IMR-90 (cell line): ENCODE measurements at regions of chr17 and their contacts with region 1.

Region 1: GRCh38 chr17:12256380-12256995 is 235.8 kb downstream of the MAP2K4 start:
- DNase-seq: peak; percentile 81
- ATAC-seq: peak; percentile 86
- H3K4me3 ChIP-seq: no peak overlapping the region
- H3K27ac ChIP-seq: no peak overlapping the region
- H3K4me1 ChIP-seq: peaks cover 7% of the 10 kb centered on the region
- H3K27me3 ChIP-seq: no peaks in the 10 kb centered on the region
- CTCF ChIP-seq: peak; percentile 93
- POLR2A ChIP-seq: peak; percentile 25; the same call in 1 of the 2 replicates
- RAD21 ChIP-seq: peak; percentile 93

Region 2: DNA sequence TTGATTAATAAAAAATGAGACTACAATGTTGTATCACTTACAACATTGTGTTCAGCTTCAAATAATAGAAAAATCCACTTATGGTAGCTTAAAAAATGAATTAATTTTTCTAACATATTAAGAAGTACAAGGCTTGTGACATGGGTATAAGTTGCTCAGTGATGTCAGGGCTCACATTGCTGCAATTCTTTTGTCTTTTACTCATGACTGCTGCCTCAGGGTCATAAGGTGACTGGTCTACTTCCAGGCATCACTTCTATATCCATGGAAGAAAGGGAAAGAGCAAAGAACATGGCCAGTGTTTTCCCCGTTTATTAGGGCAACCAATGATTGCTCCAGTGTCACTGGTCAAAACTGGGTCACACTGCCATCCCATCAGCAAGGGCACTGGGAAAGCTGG is 59.5 kb after region 1 on chr17:
- CTCF ChIA-PET with region 1: no interaction called
- POLR2A ChIA-PET with region 1: no interaction called
- dilution Hi-C with region 1: no loop called
- in situ Hi-C with region 1: no loop called
- intact Hi-C with region 1: no loop called
- DNase-seq: peak; percentile 64
- ATAC-seq: no peak
- H3K4me3 ChIP-seq: no peak overlapping the region
- H3K27ac ChIP-seq: no peak overlapping the region
- H3K4me1 ChIP-seq: peaks cover 14% of the 10 kb centered on the region
- H3K27me3 ChIP-seq: no peaks in the 10 kb centered on the region
- CTCF ChIP-seq: no peak
- POLR2A ChIP-seq: no peak
- RAD21 ChIP-seq: no peak

Region 3: DNA sequence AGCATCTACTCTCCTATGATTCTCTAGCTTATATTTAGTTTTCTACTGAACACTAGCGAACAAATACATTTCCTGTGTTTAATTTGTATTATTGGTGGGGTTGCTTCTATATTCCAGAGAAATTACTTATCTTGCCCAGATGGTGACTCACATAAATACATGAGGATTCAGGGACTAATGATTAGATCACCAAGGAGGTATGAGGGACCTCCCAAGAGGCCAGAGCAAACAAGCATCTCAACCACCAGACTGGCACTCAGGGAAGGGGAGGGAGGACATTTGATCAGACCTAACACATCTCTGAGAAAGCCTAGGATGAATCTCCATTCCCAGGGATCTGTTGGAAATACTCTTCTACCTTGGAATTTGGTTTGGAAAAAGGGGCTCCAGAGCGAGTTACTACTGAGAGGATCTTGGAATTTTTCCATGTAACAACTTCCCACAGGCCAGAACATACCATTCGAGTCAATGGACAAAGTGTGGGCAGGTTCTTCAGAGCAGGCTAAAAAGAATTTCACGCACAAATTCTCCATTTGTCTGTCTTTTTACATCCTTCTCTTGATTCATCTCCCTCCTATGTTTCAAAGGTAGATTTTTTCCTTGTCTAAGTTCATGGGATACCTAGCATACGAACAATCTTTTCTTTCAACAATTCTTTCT is 146.6 kb after region 1 on chr17:
- CTCF ChIA-PET with region 1: no interaction called
- POLR2A ChIA-PET with region 1: no interaction called
- dilution Hi-C with region 1: no loop called
- in situ Hi-C with region 1: no loop called
- intact Hi-C with region 1: loop called (anchors 2 kb)
- DNase-seq: peak; percentile 97
- ATAC-seq: peak; percentile 95
- H3K4me3 ChIP-seq: no peak overlapping the region
- H3K27ac ChIP-seq: peak overlapping the region; percentile 4; the same call in 1 of the 2 replicates
- H3K4me1 ChIP-seq: peaks cover 8% of the 10 kb centered on the region
- H3K27me3 ChIP-seq: no peaks in the 10 kb centered on the region
- CTCF ChIP-seq: no peak
- POLR2A ChIP-seq: 0 out of 2 replicates have a peak, but pooled peaks have one; percentile 44
- RAD21 ChIP-seq: no peak

Region 4: DNA sequence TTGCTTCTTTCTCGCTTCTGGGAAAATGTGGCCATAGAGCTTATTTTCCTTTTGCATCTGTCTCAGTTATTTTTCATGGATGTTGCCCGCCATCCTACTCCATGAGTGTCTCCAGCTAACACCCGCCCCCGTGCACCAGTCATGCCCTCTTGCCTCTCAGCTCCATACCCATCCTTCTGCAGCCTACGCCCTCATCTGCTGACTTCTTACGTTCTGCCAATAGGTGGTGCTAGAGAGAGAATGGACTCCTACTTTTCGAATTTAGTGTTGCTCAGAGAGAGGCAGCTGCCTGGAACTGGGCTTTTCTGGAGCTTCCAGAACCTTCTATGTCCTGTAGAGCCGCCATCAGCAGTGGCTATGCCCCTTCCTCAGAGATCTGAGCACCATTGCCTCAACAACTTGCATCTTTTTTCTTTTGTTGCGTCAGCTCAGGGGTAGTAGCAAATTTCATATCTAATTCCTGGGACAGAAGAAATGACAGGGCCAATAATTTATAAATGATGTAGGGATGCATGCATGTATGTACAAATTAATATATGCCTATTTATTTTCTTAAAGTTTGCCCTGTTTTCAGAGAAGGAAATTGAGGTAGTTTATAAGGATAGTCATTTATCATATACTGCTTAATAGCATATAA is 289.5 kb after region 1 on chr17:
- CTCF ChIA-PET with region 1: interaction called, 8 read pairs
- POLR2A ChIA-PET with region 1: no interaction called
- dilution Hi-C with region 1: no loop called
- in situ Hi-C with region 1: loop called (anchors 10 kb)
- intact Hi-C with region 1: loop called (anchors 1 kb)
- DNase-seq: peak; percentile 63
- ATAC-seq: peak; percentile 88
- H3K4me3 ChIP-seq: no peak overlapping the region
- H3K27ac ChIP-seq: no peak overlapping the region
- H3K4me1 ChIP-seq: peaks cover 4% of the 10 kb centered on the region; the same call in 1 of the 2 replicates
- H3K27me3 ChIP-seq: no peaks in the 10 kb centered on the region
- CTCF ChIP-seq: peak; percentile 70
- POLR2A ChIP-seq: no peak
- RAD21 ChIP-seq: peak; percentile 75

Region 5: GRCh38 chr17:12730931-12731521 is 474.5 kb after region 1 on chr17:
- CTCF ChIA-PET with region 1: no interaction called
- POLR2A ChIA-PET with region 1: no interaction called
- dilution Hi-C with region 1: no loop called
- in situ Hi-C with region 1: loop called (anchors 10 kb)
- intact Hi-C with region 1: no loop called
- DNase-seq: peak; percentile 78
- ATAC-seq: peak; percentile 79
- H3K4me3 ChIP-seq: no peak overlapping the region
- H3K27ac ChIP-seq: peak overlapping the region; percentile 33; the same call in 1 of the 2 replicates
- H3K4me1 ChIP-seq: peaks cover 22% of the 10 kb centered on the region
- H3K27me3 ChIP-seq: no peaks in the 10 kb centered on the region
- CTCF ChIP-seq: no peak
- POLR2A ChIP-seq: no peak
- RAD21 ChIP-seq: no peak

Region 6: DNA sequence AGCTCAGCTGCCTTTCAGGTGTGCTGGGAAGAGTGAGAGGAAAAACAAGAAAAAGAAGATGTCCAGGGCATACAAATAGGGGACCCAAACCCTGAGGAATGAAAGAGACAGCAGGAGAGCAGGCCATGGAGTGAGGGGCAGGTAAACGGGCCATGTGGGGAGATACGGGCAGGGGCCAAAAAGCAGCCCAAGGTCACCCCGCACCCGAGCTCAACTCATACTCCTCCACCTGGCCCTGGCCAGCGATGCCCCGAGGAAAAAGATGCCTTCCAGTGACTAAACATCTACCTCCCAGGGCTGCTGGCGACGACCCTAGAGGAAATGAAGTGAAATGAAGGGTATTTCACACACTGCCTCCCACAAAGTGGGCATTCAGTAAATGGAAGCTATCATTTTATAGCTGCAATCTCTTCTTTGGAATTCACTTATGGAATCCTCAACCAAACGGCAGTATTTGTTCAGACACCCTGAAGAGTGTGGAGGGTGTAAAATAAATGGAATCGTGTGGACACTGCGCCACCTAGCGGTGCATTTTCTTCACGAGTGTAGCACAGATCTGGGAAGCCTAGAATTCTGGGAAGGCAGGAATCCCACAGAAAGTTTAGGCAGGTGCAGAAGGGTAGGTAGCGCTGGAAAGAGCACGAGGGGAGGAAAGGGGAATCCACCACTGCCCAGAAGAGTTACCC is 746.4 kb after region 1 on chr17:
- CTCF ChIA-PET with region 1: no interaction called
- POLR2A ChIA-PET with region 1: no interaction called
- dilution Hi-C with region 1: no loop called
- in situ Hi-C with region 1: loop called (anchors 5 kb)
- intact Hi-C with region 1: loop called (anchors 1 kb)
- DNase-seq: peak; percentile 77
- ATAC-seq: peak; percentile 95
- H3K4me3 ChIP-seq: no peak overlapping the region
- H3K27ac ChIP-seq: no peak overlapping the region
- H3K4me1 ChIP-seq: no peaks in the 10 kb centered on the region
- H3K27me3 ChIP-seq: no peaks in the 10 kb centered on the region
- CTCF ChIP-seq: peak; percentile 83
- POLR2A ChIP-seq: no peak
- RAD21 ChIP-seq: peak; percentile 88